CD4-positive, alpha-beta memory T cell (primary cell): ENCODE measurements at regions of chr4 and their contacts with region 1.

Region 1: GRCh38 chr4:2241410-2242353 is at the starts of genes HAUS3 and POLN:
- DNase-seq: peak; percentile 98 to 100 (median 100)
- H3K4me3 ChIP-seq: peak within 1 kb of the TSS; percentile 49 to 91
- H3K4me3 Mint-ChIP-seq: peak within 1 kb of the TSS; percentile 81 to 95 (median 91)
- H3K27ac ChIP-seq: peak within 1 kb of the TSS; percentile 88
- H3K27ac Mint-ChIP-seq: peak within 1 kb of the TSS; percentile 85 to 98 (median 93)
- H3K4me1 ChIP-seq: peaks cover 44% of the 10 kb centered on the region
- H3K4me1 Mint-ChIP-seq: peaks cover 46 to 73% (median 58%) of the 10 kb centered on the region in 4 donors
- H3K27me3 ChIP-seq: no peaks in the 10 kb centered on the region
- H3K27me3 Mint-ChIP-seq: no peaks in the 10 kb centered on the region
- total RNA-seq, gene HAUS3: 35.9 to 39.2 TPM
- total RNA-seq, gene POLN: 3.8 to 4.4 TPM

Region 2: DNA sequence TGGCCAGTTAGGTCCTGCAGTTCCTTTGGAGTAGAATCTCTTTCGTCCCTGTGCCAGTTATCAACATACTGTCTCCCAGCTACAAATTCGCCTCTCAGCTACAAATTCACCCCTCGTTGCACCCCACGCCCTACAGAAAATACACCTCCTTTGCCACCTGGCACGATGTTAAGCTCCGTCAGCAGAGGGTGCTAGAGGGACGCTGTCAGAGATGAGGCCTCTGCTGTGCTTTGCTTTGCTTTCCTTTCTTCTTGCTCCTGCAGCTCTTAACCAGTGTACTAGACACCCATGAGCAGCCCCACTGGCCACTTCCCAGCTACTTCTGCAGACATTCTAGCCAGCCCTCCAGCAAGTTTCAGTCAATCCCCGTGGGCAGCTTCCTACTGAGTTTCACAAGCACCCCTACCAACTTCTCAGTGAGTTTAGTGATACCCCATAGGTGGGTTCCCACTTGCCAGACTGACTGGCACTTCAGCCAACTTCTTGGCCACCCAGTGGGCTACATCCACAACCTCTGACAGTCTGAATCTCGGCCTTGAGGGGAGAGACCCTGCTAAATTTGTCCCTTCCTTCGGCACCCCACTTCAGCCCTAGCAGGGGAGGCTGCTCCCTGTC is 21.6 kb before region 1 on chr4:
- CTCF ChIA-PET with region 1: interaction called, 14 read pairs
- POLR2A ChIA-PET with region 1: interaction called, 7 read pairs
- intact Hi-C with region 1: no loop called
- DNase-seq: peak; percentile 75 to 81 (median 76)
- H3K4me3 ChIP-seq: no peak overlapping the region
- H3K4me3 Mint-ChIP-seq: no peak overlapping the region
- H3K27ac ChIP-seq: no peak overlapping the region
- H3K27ac Mint-ChIP-seq: peak overlapping the region in 5 of 7 donors; percentile 2 to 81 (median 43)
- H3K4me1 ChIP-seq: no peaks in the 10 kb centered on the region
- H3K4me1 Mint-ChIP-seq: peaks cover 4 to 7% (median 6%) of the 10 kb centered on the region in 4 donors
- H3K27me3 ChIP-seq: no peaks in the 10 kb centered on the region
- H3K27me3 Mint-ChIP-seq: no peaks in the 10 kb centered on the region

Region 3: DNA sequence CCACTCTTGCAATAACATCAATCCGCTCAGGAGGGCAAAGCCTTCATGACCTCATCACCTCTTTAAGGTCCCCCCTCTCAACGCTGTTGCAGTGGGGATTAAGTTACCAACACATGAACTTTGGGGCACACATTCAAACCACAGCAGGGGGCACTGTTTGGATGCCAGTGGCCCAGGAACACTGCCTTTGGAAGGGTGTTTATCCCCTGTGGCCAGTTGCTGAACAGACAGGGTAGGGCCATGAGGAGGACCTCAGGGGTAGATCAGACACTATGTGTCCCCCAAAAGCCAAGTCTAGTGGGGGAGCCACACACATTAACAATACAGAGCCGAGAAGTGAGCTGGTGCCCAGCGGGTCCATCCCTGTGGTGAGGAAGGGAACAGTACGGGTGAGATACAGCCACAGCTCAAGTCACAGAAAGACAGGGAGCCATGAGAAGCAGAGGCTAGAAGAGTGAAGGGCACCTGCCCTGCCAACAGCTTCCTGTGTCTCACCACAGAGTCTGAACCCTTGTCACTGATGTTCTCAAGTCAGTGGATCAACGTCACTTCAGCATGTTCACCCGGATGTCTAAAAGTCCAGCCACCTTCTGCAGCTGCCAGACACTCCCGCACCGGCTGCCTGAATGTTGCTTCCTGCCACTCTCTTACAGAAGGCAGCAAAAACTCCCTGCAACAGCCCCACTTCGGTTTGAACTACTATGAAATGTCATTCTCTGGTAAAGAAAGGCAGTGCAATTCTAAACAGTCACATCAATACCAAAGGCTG is 40.1 kb after region 1 on chr4:
- CTCF ChIA-PET with region 1: interaction called, 5 read pairs
- POLR2A ChIA-PET with region 1: interaction called, 15 read pairs
- intact Hi-C with region 1: loop called (anchors 2 kb)
- DNase-seq: peak; percentile 88 to 98 (median 92)
- H3K4me3 ChIP-seq: peak overlapping the region in 1 of 2 donors; percentile 47
- H3K4me3 Mint-ChIP-seq: peak overlapping the region; percentile 46 to 88 (median 74)
- H3K27ac ChIP-seq: peak overlapping the region; percentile 80
- H3K27ac Mint-ChIP-seq: peak overlapping the region; percentile 92 to 100 (median 99)
- H3K4me1 ChIP-seq: peaks cover 44% of the 10 kb centered on the region
- H3K4me1 Mint-ChIP-seq: peaks cover 25 to 51% (median 31%) of the 10 kb centered on the region in 4 donors
- H3K27me3 ChIP-seq: no peaks in the 10 kb centered on the region
- H3K27me3 Mint-ChIP-seq: no peaks in the 10 kb centered on the region

Region 4: GRCh38 chr4:2412885-2413716 is 171.4 kb after region 1 on chr4:
- CTCF ChIA-PET with region 1: interaction called, 3 read pairs
- POLR2A ChIA-PET with region 1: interaction called, 55 read pairs
- intact Hi-C with region 1: loop called (anchors 1 kb)
- DNase-seq: peak; percentile 96 to 99 (median 97)
- H3K4me3 ChIP-seq: peak overlapping the region; percentile 15 to 55
- H3K4me3 Mint-ChIP-seq: peak overlapping the region; percentile 79 to 90 (median 82)
- H3K27ac ChIP-seq: peak overlapping the region; percentile 86
- H3K27ac Mint-ChIP-seq: peak overlapping the region; percentile 92 to 99 (median 98)
- H3K4me1 ChIP-seq: peaks cover 81% of the 10 kb centered on the region
- H3K4me1 Mint-ChIP-seq: peaks cover 49 to 81% (median 64%) of the 10 kb centered on the region in 4 donors
- H3K27me3 ChIP-seq: no peaks in the 10 kb centered on the region
- H3K27me3 Mint-ChIP-seq: peaks cover 0 to 2% of the 10 kb centered on the region in 2 donors

Region 5: GRCh38 chr4:2468445-2469192 is 226.9 kb after region 1 on chr4 and contains the start of gene RNF4:
- CTCF ChIA-PET with region 1: no interaction called
- POLR2A ChIA-PET with region 1: interaction called, 32 read pairs
- intact Hi-C with region 1: loop called (anchors 1 kb)
- DNase-seq: peak; percentile 94 to 98 (median 97)
- H3K4me3 ChIP-seq: peak within 1 kb of the TSS; percentile 67 to 84
- H3K4me3 Mint-ChIP-seq: peak within 1 kb of the TSS; percentile 95 to 98 (median 95)
- H3K27ac ChIP-seq: peak within 1 kb of the TSS; percentile 98
- H3K27ac Mint-ChIP-seq: peak within 1 kb of the TSS; percentile 96 to 99 (median 98)
- H3K4me1 ChIP-seq: peaks cover 52% of the 10 kb centered on the region
- H3K4me1 Mint-ChIP-seq: peaks cover 28 to 62% (median 41%) of the 10 kb centered on the region in 4 donors
- H3K27me3 ChIP-seq: no peaks in the 10 kb centered on the region
- H3K27me3 Mint-ChIP-seq: no peaks in the 10 kb centered on the region
- total RNA-seq, gene RNF4: 94.0 to 104 TPM

Region 6: DNA sequence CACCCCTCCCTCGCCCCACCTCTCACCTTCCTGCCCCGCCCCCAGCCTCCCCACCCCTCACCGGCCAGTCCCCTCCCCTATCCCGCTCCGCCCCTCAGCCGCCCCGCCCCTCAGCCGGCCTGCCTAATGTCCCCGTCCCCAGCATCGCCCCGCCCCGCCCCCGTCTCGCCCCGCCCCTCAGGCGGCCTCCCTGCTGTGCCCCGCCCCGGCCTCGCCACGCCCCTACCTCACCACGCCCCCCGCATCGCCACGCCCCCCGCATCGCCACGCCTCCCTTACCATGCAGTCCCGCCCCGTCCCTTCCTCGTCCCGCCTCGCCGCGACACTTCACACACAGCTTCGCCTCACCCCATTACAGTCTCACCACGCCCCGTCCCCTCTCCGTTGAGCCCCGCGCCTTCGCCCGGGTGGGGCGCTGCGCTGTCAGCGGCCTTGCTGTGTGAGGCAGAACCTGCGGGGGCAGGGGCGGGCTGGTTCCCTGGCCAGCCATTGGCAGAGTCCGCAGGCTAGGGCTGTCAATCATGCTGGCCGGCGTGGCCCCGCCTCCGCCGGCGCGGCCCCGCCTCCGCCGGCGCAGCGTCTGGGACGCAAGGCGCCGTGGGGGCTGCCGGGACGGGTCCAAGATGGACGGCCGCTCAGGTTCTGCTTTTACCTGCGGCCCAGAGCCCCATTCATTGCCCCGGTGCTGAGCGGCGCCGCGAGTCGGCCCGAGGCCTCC is 832.6 kb after region 1 on chr4 and contains the starts of genes HTT and HTT-AS:
- CTCF ChIA-PET with region 1: no interaction called
- POLR2A ChIA-PET with region 1: no interaction called
- intact Hi-C with region 1: loop called (anchors 5 kb)
- DNase-seq: peak; percentile 94 to 99 (median 96)
- H3K4me3 ChIP-seq: peak within 1 kb of the TSS; percentile 65 to 87
- H3K4me3 Mint-ChIP-seq: peak within 1 kb of the TSS; percentile 87 to 96 (median 92)
- H3K27ac ChIP-seq: peak within 1 kb of the TSS; percentile 75
- H3K27ac Mint-ChIP-seq: peak within 1 kb of the TSS; percentile 84 to 97 (median 95)
- H3K4me1 ChIP-seq: peaks cover 29% of the 10 kb centered on the region
- H3K4me1 Mint-ChIP-seq: peaks cover 18 to 32% (median 24%) of the 10 kb centered on the region in 4 donors
- H3K27me3 ChIP-seq: no peaks in the 10 kb centered on the region
- H3K27me3 Mint-ChIP-seq: no peaks in the 10 kb centered on the region
- total RNA-seq, gene HTT: 62.2 to 67.7 TPM
- total RNA-seq, gene HTT-AS: not detected